ENCODE measurements at regions of chr12 and their contacts with region 1.

Region 1: GRCh38 chr12:117119592-117120198 is 20.5 kb upstream of the TESC start:
- DNase-seq: no peak
- ATAC-seq: peak; percentile 75

Region 2: DNA sequence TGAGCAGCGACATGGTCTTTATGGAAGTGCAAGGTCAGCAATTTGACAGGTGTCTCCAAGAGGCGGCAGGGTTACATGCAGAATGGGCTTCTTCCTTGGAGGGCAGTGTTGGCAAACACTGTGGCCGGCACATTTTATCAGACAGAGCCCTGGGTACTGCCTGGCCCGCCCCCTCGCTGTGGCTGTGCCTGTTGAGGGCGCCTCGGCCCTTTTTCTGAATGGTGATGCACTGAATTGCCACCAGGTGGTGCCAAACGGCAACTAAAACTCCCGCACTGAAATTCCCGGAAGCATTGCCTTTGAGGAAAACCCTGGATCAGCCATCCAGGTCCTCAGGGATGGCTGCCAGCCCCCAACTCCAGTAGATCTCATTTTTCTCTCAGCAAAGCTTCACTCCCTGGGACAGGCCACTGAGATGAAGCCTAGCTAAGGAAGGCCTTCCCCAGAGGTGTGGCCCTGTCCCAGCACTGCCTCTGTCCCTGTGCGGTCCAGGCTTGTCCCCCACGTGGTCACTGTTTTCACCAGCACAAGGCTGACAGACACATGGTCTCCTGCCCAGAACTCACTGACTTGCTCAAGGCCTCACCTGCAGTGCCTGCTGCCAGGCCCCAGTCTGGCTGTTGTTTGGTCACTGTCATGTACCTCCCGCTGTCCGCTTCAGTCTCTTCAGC is 94.1 kb before region 1 on chr12:
- intact Hi-C with region 1: loop called (anchors 5 kb)
- DNase-seq: peak; percentile 40 to 58
- ATAC-seq: peak; percentile 89

Region 3: GRCh38 chr12:117213295-117213808 is 93.7 kb after region 1 on chr12:
- intact Hi-C with region 1: no loop called
- DNase-seq: no peak
- ATAC-seq: no peak